Activated CD4-positive, alpha-beta T cell treated with anti-CD3 and anti-CD28 coated beads, Interleukin-2, amount 10 ng/mL, durations not matched to agents 24 days and 14 days (primary cell): ENCODE measurements at regions of chr3 and their contacts with region 1.

Region 1: DNA sequence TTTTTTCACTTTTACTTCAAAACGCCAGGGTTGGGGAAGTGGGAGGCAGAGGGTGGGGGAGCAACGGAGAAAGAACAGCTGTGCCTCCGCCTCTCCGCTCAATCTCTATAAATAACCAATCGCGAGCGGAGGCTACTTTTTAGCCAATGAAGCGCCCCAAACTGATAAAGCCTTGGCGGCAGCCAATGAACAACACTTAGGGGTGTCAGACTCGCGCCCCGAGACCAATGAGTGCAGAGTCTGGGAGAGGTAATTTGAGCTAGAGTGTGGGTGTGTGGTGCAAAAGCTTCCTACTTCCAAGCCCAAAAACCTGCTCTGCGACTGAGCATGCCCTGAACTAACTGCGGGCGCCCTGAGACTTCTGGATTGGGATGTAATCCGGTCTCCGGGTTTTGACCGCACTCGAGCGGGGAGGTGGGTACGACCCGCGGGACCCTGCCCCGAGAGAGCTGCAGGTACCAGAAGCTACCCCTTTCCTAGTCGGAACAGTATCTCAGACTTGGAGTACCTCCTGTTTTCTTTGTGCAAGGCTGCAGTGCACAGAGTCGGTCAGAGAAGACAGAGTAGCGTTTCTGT is 800 bp upstream of the RAP2B start:
- DNase-seq: peak; percentile 97
- H3K4me3 Mint-ChIP-seq: peak overlapping the region; percentile 91
- H3K27ac Mint-ChIP-seq: peak overlapping the region; percentile 99
- H3K4me1 Mint-ChIP-seq: peaks cover 34% of the 10 kb centered on the region
- H3K27me3 Mint-ChIP-seq: no peaks in the 10 kb centered on the region

Region 2: DNA sequence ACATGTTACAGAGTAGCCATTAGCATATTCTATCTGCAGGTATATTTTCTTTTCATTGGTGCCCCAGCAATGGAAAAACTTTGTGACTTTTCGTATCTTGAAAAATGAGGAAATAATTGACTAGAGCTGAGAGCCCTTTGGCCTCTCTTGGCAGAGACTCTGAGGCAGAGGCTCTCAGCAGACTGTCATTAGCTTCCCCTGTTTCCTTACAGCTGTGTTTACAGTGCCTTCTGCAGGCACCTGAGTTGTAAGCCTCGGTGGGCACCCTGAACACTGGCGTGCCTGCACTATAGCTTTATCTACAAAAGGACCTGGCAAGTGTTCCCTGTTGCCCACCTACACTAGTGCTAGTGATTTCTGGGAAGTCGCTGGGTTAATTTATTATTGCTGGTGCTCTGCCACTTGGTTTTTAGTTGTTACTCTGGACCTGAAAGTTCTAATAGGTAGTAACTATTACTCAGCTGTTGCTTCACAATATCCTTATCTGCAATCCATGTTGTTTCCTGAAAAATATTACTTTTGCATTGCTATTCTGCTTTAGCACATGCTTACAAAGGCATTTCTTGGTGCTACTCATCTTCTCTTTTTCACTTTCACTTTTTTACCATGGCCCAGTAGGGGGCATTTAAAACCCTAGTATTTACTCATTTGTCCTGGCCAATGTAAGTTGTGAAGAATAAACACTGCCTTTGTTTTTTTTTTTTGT is 1950.4 kb before region 1 on chr3:
- intact Hi-C with region 1: loop called (anchors 5 kb)
- DNase-seq: peak; percentile 75
- H3K4me3 Mint-ChIP-seq: peak overlapping the region; percentile 76
- H3K27ac Mint-ChIP-seq: peak overlapping the region; percentile 90
- H3K4me1 Mint-ChIP-seq: peaks cover 56% of the 10 kb centered on the region
- H3K27me3 Mint-ChIP-seq: no peaks in the 10 kb centered on the region

Region 3: GRCh38 chr3:153138276-153139210 is 22.7 kb before region 1 on chr3:
- intact Hi-C with region 1: loop called (anchors 1 kb)
- DNase-seq: peak; percentile 80
- H3K4me3 Mint-ChIP-seq: peak overlapping the region; percentile 25
- H3K27ac Mint-ChIP-seq: peak overlapping the region; percentile 76
- H3K4me1 Mint-ChIP-seq: peaks cover 24% of the 10 kb centered on the region
- H3K27me3 Mint-ChIP-seq: peaks cover 3% of the 10 kb centered on the region

Region 4: DNA sequence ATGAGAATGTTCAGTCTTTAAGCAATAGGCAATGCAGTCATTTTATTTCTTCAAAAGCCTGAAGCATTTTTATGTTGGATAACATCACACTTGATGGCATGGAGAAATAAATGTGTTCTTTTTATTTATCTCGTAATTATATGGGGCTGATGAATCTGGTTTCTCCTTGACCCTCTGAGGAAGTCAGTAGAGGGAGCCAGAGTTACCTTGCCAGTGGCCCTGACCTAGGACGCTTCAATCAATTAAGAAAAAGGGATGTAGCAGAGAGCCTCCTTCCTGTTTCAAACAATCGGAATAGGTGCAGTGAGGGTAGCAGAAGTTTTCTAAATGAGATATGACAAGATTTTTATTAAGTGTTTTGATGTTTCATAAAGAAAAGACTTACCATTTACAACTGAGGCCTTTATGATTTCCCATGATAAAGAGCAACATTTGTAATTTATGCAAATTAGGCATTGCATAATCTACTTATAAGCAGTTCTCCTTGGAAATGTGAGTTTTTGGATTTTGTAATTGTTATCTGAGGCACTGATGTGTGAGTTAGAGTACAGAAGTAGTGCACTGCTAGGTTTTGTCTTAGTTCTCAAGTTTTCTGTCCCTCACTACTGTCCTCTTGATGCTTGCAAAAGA is 129.9 kb after region 1 on chr3:
- intact Hi-C with region 1: loop called (anchors 2 kb)
- DNase-seq: peak; percentile 62
- H3K4me3 Mint-ChIP-seq: no peak overlapping the region
- H3K27ac Mint-ChIP-seq: no peak overlapping the region
- H3K4me1 Mint-ChIP-seq: peaks cover 29% of the 10 kb centered on the region
- H3K27me3 Mint-ChIP-seq: no peaks in the 10 kb centered on the region

Region 5: GRCh38 chr3:153640689-153641301 is 479.6 kb after region 1 on chr3:
- intact Hi-C with region 1: loop called (anchors 5 kb)
- DNase-seq: no peak
- H3K4me3 Mint-ChIP-seq: no peak overlapping the region
- H3K27ac Mint-ChIP-seq: no peak overlapping the region
- H3K4me1 Mint-ChIP-seq: peaks cover 41% of the 10 kb centered on the region
- H3K27me3 Mint-ChIP-seq: no peaks in the 10 kb centered on the region

Region 6: GRCh38 chr3:154323891-154324738 is 1162.9 kb after region 1 on chr3 and contains the start of gene DHX36:
- intact Hi-C with region 1: loop called (anchors 2 kb)
- DNase-seq: peak; percentile 96
- H3K4me3 Mint-ChIP-seq: peak within 1 kb of the TSS; percentile 92
- H3K27ac Mint-ChIP-seq: peak within 1 kb of the TSS; percentile 98
- H3K4me1 Mint-ChIP-seq: peaks cover 26% of the 10 kb centered on the region
- H3K27me3 Mint-ChIP-seq: peaks cover 4% of the 10 kb centered on the region
- total RNA-seq, gene DHX36: 92.5 and 93.3 TPM in 2 replicates